CD4-positive, alpha-beta memory T cell (primary cell): ENCODE measurements at regions of chr18 and their contacts with region 1.

Region 1: DNA sequence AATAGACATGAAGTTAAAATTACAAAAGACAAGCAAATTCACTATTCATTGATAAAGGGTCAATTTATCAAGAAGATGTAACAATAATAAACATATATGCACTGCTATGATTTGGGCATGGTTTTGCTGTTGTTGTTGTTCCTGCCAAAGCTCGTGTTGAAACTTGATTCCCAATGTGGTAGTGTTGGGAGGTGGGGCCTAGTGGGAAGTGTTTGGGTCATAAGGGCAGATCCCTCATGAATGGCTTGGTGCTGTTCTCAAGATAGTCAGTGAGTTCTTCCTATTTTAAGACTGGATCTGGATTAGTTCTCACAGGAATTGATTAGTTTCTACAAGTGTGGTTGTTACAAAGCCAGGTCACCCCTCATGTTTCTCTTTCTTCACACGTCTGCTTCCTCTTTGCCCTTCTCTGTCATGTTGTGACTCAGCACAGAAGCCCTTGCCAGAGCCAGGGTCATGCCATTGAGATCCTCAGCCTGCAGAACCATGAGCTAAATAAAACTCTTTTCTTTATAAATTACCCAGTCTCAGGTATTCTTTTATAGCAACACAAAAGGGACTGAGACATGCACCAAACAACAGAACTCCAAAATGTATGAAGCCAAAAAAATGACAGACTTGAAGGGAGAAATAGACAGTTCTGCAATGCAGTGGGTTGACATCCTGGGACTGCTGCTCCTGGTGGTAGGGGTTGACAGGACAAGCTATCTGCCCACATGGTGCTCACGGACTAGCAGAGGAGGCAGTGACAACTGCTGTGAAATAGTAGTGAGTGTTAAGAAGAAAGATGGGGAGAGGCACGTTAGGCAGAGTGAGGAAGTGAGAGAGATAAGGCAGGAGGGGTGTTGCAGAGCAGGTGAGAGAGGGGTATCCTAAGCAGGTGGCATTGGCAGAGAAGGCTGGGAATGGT is 18.6 kb upstream of the SKA1 start:
- DNase-seq: no peak
- H3K4me3 ChIP-seq: no peak overlapping the region
- H3K4me3 Mint-ChIP-seq: peak overlapping the region in 1 of 8 donors; percentile 19
- H3K27ac ChIP-seq: no peak overlapping the region
- H3K27ac Mint-ChIP-seq: peak overlapping the region in 3 of 7 donors; percentile 53 to 81 (median 55)
- H3K4me1 ChIP-seq: no peaks in the 10 kb centered on the region
- H3K4me1 Mint-ChIP-seq: peaks cover 4 to 9% (median 7%) of the 10 kb centered on the region in 4 donors
- H3K27me3 ChIP-seq: no peaks in the 10 kb centered on the region
- H3K27me3 Mint-ChIP-seq: peaks cover 8 to 22% of the 10 kb centered on the region in 2 donors

Region 2: DNA sequence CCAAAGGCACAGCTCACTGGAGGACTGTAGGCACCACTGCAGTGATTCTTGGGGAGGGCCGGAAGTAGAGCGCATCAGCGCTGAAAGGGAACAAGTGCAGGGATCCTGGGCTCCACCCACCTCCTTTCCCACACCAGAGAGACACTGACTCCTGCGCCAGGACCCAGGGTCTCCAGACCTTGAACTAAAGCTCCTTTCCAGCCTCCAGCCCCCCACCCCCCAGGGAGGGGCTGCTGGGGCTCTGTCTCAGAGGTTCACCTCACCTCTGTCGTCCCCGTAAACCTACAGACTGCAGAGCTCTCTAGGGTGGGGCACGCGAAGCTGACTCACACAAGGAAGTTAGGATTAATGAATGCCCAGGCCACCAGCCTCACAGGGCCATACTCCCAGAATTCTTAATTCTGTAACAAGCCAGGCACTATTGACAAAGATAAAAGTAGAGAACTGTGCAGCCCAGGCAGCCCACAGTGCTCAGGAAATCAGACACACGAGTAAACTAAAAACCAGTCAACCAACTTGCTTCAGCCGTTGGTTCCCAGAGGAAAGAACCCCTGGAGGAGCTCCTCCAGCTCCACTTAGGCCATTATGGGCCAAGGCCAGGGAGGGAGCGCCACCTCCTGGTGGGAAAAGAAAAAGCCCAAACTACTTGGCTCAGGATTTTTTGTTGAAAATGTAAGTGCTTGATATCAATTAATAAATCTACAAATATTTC is 497.8 kb before region 1 on chr18:
- CTCF ChIA-PET with region 1: interaction called, 7 read pairs
- POLR2A ChIA-PET with region 1: no interaction called
- intact Hi-C with region 1: loop called (anchors 1 kb)
- DNase-seq: peak in 4 of 5 donors; percentile 28 to 47 (median 44)
- H3K4me3 ChIP-seq: no peak overlapping the region
- H3K4me3 Mint-ChIP-seq: no peak overlapping the region
- H3K27ac ChIP-seq: no peak overlapping the region
- H3K27ac Mint-ChIP-seq: no peak overlapping the region
- H3K4me1 ChIP-seq: no peaks in the 10 kb centered on the region
- H3K4me1 Mint-ChIP-seq: no peaks in the 10 kb centered on the region
- H3K27me3 ChIP-seq: no peaks in the 10 kb centered on the region
- H3K27me3 Mint-ChIP-seq: peaks cover 0 to 2% of the 10 kb centered on the region in 2 donors

Region 3: GRCh38 chr18:50111265-50111792 is 245.0 kb before region 1 on chr18:
- CTCF ChIA-PET with region 1: no interaction called
- POLR2A ChIA-PET with region 1: no interaction called
- intact Hi-C with region 1: no loop called
- DNase-seq: no peak
- H3K4me3 ChIP-seq: no peak overlapping the region
- H3K4me3 Mint-ChIP-seq: no peak overlapping the region
- H3K27ac ChIP-seq: no peak overlapping the region
- H3K27ac Mint-ChIP-seq: no peak overlapping the region
- H3K4me1 ChIP-seq: no peaks in the 10 kb centered on the region
- H3K4me1 Mint-ChIP-seq: no peaks in the 10 kb centered on the region
- H3K27me3 ChIP-seq: peaks cover 4% of the 10 kb centered on the region
- H3K27me3 Mint-ChIP-seq: peaks cover 13 to 28% of the 10 kb centered on the region in 2 donors

Region 4: DNA sequence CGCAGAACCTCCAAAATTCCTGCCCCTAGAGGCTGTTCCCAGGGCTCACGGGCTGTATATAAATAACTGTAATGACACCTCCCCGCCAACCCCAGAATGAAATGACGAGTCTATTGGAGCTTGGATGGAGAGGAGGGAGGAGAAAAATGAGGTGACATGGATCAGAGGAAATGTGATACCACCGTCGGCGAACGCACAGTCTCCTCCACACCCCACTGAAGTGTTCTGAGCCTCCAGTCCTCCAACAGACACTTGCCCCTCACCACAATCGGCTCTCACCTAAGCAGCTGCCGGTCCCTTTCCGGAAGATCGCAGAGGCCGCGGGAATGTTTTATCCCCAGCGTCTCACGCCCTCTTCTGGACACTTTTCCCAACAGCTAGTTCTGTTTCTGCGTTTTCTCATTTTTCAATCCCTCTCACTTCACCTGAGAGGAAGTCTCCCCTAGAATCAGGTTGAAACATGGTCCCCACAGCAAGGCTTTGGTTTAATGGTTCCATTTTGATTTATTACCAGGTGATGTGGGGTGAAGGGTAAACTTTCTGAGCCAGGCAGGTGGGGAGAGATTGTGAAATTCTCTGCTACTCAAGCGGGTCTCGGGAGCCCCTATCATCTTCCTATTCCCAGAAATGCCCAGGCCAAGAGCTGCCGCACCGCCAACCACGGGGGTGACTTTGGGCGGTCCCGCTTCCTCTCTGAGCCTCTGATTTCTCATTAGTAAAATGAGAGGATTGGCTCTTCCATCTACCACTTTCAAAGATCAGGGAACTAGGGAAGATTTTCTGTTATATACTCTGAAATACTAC is 152.3 kb before region 1 on chr18:
- CTCF ChIA-PET with region 1: interaction called, 16 read pairs
- POLR2A ChIA-PET with region 1: no interaction called
- intact Hi-C with region 1: loop called (anchors 1 kb)
- DNase-seq: no peak
- H3K4me3 ChIP-seq: no peak overlapping the region
- H3K4me3 Mint-ChIP-seq: peak overlapping the region in 5 of 8 donors; percentile 51 to 64 (median 55)
- H3K27ac ChIP-seq: no peak overlapping the region
- H3K27ac Mint-ChIP-seq: peak overlapping the region in 1 of 7 donors; percentile 55
- H3K4me1 ChIP-seq: no peaks in the 10 kb centered on the region
- H3K4me1 Mint-ChIP-seq: peaks cover 2 to 10% (median 8%) of the 10 kb centered on the region in 4 donors
- H3K27me3 ChIP-seq: peaks cover 9% of the 10 kb centered on the region
- H3K27me3 Mint-ChIP-seq: peaks cover 33 to 42% of the 10 kb centered on the region in 2 donors

Region 5: GRCh38 chr18:50281295-50281971 is 74.9 kb before region 1 on chr18 and contains the start of gene MBD1:
- CTCF ChIA-PET with region 1: interaction called, 13 read pairs
- POLR2A ChIA-PET with region 1: interaction called, 4 read pairs
- intact Hi-C with region 1: loop called (anchors 1 kb)
- DNase-seq: peak; percentile 97 to 99 (median 98)
- H3K4me3 ChIP-seq: peak within 1 kb of the TSS; percentile 45 to 97
- H3K4me3 Mint-ChIP-seq: peak within 1 kb of the TSS; percentile 96 to 99 (median 98)
- H3K27ac ChIP-seq: peak within 1 kb of the TSS; percentile 95
- H3K27ac Mint-ChIP-seq: peak within 1 kb of the TSS; percentile 88 to 99 (median 98)
- H3K4me1 ChIP-seq: peaks cover 36% of the 10 kb centered on the region
- H3K4me1 Mint-ChIP-seq: peaks cover 31 to 59% (median 47%) of the 10 kb centered on the region in 4 donors
- H3K27me3 ChIP-seq: no peaks in the 10 kb centered on the region
- H3K27me3 Mint-ChIP-seq: no peaks in the 10 kb centered on the region
- total RNA-seq, gene MBD1: 135 to 144 TPM

Region 6: DNA sequence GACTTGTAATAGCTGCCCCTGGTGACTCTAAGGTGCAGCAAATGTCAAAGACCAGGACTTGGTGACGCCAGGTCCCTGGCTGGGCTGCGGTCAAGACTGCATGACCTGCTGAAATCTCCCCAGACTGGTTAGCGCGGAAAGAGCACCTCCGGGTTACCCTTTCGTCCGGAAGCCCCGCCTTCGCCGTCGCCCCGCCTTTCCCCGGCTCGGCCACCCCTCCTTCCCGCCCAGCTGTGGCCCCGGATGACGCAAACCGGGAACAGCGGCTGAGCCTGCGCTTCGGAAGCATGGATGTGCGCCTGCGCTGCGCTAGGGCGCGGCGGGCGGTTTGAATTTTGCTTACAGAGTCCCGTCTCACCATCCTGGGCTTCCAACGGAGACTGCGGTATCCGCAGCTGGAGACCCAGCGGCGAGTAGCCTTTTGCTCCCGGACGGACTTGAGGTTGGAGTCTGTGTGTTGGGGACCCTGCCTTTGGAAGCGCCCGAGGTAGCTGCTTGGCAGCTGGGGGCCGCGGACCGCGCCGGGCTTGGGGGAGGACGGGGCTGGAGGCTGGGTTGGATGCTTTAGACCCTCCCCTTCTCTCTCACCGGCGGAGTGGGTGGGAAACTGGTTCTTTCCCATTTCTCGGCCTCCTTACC is 18.6 kb after region 1 on chr18 and contains the start of gene SKA1:
- CTCF ChIA-PET with region 1: interaction called, 26 read pairs
- POLR2A ChIA-PET with region 1: no interaction called
- intact Hi-C with region 1: loop called (anchors 1 kb)
- DNase-seq: peak; percentile 89 to 91 (median 90)
- H3K4me3 ChIP-seq: peak within 1 kb of the TSS; percentile 60 to 63
- H3K4me3 Mint-ChIP-seq: peak within 1 kb of the TSS; percentile 79 to 85 (median 82)
- H3K27ac ChIP-seq: peak within 1 kb of the TSS; percentile 57
- H3K27ac Mint-ChIP-seq: peak within 1 kb of the TSS; percentile 81 to 94 (median 91)
- H3K4me1 ChIP-seq: peaks cover 14% of the 10 kb centered on the region
- H3K4me1 Mint-ChIP-seq: peaks cover 6 to 15% (median 11%) of the 10 kb centered on the region in 4 donors
- H3K27me3 ChIP-seq: peaks cover 5% of the 10 kb centered on the region
- H3K27me3 Mint-ChIP-seq: peaks cover 6 to 10% of the 10 kb centered on the region in 2 donors
- total RNA-seq, gene SKA1: 0.28 to 0.47 TPM

Region 7: DNA sequence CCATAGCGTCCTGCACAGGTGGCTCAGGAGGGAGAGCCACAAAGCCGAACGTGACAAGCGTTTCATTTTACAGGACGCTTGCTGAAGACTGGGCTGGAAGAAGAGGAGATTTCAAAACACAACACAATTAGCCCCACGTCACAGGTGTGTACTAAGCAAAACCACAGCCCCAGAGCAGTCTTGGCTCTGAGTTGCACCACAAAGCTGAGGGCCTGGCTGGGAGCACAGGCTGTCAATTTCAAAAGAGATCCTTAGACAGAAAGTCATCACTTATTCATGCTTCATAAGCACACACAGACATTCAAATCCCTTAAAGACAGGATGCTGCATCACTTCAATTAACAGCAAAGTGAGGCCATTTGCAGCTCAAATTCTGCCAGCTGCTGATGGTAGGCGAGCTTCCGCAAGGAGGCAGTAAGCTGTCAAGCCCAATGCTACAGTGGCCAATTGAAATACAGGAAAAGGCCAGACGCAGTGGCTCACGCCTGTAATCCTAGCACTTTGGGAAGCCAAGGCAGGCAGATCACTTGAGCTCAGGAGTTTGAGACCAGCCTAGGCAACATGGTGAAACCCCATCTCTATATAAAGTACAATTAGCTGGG is 98.2 kb after region 1 on chr18:
- CTCF ChIA-PET with region 1: no interaction called
- POLR2A ChIA-PET with region 1: no interaction called
- intact Hi-C with region 1: no loop called
- DNase-seq: no peak
- H3K4me3 ChIP-seq: no peak overlapping the region
- H3K4me3 Mint-ChIP-seq: no peak overlapping the region
- H3K27ac ChIP-seq: no peak overlapping the region
- H3K27ac Mint-ChIP-seq: no peak overlapping the region
- H3K4me1 ChIP-seq: no peaks in the 10 kb centered on the region
- H3K4me1 Mint-ChIP-seq: no peaks in the 10 kb centered on the region
- H3K27me3 ChIP-seq: no peaks in the 10 kb centered on the region
- H3K27me3 Mint-ChIP-seq: peaks cover 7 to 10% of the 10 kb centered on the region in 2 donors